Aorta (tissue), 5 donors: ENCODE measurements at regions of chr3 and their contacts with region 1.

Region 1: DNA sequence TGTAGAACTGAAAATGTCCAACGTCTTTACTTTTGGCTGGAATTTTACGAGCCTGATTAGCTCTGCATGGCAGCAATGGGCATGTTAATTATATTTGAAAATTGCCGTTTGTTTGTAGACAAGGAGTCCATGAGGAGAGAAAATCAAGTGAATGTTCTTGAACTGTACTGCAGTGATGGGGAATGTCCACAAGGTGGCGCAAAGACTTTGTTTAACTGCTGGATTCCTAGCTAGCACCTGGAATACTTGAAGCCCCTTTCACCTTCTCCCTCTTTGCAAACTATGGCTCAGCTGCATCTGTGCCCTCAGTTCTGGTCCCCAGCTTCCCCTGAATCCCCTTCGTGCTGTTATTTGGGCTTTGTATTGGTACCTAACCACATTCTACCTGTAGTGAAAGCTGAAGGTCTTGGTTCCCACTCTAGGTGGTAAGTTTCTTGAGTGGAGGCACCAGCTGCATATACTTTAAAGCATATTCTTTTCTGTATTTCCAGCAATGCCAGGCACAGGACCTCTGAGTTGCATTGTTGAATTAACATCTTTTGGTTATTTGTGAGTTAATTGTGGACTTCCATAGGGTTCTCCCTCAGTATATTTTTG is 25.3 kb downstream of the EXOG start:
- DNase-seq: peak in 1 of 2 donors; percentile 54
- ATAC-seq: peak; percentile 78
- H3K4me3 ChIP-seq: no peak overlapping the region
- H3K27ac ChIP-seq: no peak overlapping the region
- H3K4me1 ChIP-seq: no peaks in the 10 kb centered on the region
- H3K27me3 ChIP-seq: no peaks in the 10 kb centered on the region

Region 2: GRCh38 chr3:38453075-38453912 is 68.2 kb before region 1 on chr3 and contains the start of gene ACVR2B:
- intact Hi-C with region 1: no loop called
- DNase-seq: peak; percentile 92 to 94
- ATAC-seq: peak; percentile 89
- H3K4me3 ChIP-seq: peak within 1 kb of the TSS; percentile 70 to 86
- H3K27ac ChIP-seq: peak within 1 kb of the TSS in 1 of 2 donors; percentile 16
- H3K4me1 ChIP-seq: no peaks in the 10 kb centered on the region
- H3K27me3 ChIP-seq: no peaks in the 10 kb centered on the region
- total RNA-seq, gene ACVR2B: 4.0 to 8.2 TPM

Region 3: GRCh38 chr3:38689774-38690173 is 168.3 kb after region 1 on chr3:
- intact Hi-C with region 1: no loop called
- DNase-seq: no peak
- ATAC-seq: no peak
- H3K4me3 ChIP-seq: no peak overlapping the region
- H3K27ac ChIP-seq: no peak overlapping the region
- H3K4me1 ChIP-seq: no peaks in the 10 kb centered on the region
- H3K27me3 ChIP-seq: no peaks in the 10 kb centered on the region

Region 4: GRCh38 chr3:38793721-38794120 is 272.2 kb after region 1 on chr3:
- intact Hi-C with region 1: no loop called
- DNase-seq: no peak
- ATAC-seq: no peak
- H3K4me3 ChIP-seq: no peak overlapping the region
- H3K27ac ChIP-seq: no peak overlapping the region
- H3K4me1 ChIP-seq: no peaks in the 10 kb centered on the region
- H3K27me3 ChIP-seq: no peaks in the 10 kb centered on the region

Region 5: GRCh38 chr3:38843898-38844297 is 322.4 kb after region 1 on chr3:
- intact Hi-C with region 1: loop called (anchors 5 to 10 kb)
- DNase-seq: no peak
- ATAC-seq: peak; percentile 49
- H3K4me3 ChIP-seq: no peak overlapping the region
- H3K27ac ChIP-seq: no peak overlapping the region
- H3K4me1 ChIP-seq: no peaks in the 10 kb centered on the region
- H3K27me3 ChIP-seq: no peaks in the 10 kb centered on the region

Region 6: DNA sequence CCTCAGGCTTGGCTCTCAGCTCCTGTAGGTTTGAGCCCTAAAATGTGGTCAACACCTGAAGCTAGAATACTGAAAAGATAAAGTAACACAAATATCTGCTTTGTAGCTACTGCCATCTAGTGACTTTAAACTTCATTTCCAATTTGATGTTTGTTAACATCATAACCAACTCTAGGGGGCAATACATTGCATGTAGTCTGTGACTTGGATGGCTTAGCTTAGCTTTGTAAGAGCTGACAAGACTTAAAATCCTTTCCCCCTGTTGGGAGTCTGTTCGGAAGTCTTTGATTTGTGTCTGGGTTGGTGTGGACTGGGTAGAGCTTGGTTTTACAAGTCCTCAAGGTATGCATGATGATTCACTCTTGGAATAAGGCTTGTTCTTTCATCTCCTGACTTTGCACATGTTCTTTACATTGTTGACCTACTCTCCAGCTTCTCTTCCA is 478.5 kb after region 1 on chr3:
- intact Hi-C with region 1: loop called (anchors 10 kb)
- DNase-seq: no peak
- ATAC-seq: no peak
- H3K4me3 ChIP-seq: no peak overlapping the region
- H3K27ac ChIP-seq: no peak overlapping the region
- H3K4me1 ChIP-seq: no peaks in the 10 kb centered on the region
- H3K27me3 ChIP-seq: no peaks in the 10 kb centered on the region